ENCODE measurements at regions of chr12 and their contacts with region 1.

Region 1: GRCh38 chr12:68745904-68746571 is at the start of gene SLC35E3:
- DNase-seq: peak; percentile 88 to 95
- ATAC-seq: peak; percentile 96 to 99 (median 99)
- H3K4me3 ChIP-seq: peak within 1 kb of the TSS; percentile 80
- H3K4me3 Mint-ChIP-seq: peak within 1 kb of the TSS; percentile 97
- H3K27ac ChIP-seq: peak within 1 kb of the TSS; percentile 81
- H3K27ac Mint-ChIP-seq: peak within 1 kb of the TSS; percentile 89 to 94
- H3K4me1 ChIP-seq: peaks cover 13% of the 10 kb centered on the region
- H3K4me1 Mint-ChIP-seq: peaks cover 39% of the 10 kb centered on the region in 2 donors
- H3K27me3 ChIP-seq: no peaks in the 10 kb centered on the region
- H3K27me3 Mint-ChIP-seq: no peaks in the 10 kb centered on the region
- CTCF ChIP-seq: no peak
- total RNA-seq, gene SLC35E3: 8.3 to 15.3 (median 10.2) TPM

Region 2: DNA sequence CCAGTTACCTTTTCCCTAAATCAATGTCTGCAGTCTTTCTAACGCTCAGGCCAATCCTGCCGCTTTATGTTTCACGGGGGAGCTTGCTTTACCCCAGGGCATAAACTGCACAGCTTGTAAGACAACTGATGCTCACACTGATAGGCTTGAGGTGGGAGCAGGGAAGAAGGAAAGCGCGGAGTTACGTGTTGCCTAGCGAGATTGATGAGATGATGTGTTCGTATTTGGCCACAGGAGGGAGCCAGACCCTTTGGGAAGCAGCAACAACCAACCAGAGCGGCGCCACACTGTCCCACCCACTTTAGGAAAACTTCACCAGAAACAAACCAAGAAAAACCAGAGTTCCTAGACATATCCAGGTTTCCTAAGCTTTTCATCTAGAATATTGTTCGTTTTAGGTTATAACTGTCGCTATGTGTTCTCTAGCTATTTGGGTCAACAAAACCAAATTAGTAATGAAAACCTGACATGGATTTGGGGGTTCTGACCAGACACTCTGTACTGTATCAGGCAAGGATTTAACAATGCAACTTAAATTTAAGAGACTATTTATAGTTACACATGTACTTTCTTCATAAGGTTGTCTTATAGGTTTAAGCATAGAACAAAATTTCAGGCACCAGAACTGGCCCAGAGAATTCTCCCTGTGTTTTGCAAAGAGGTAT is 522.8 kb before region 1 on chr12:
- intact Hi-C with region 1: loop called (anchors 5 kb)
- DNase-seq: peak; percentile 53 to 91
- ATAC-seq: peak; percentile 95 to 100 (median 99)
- H3K4me3 ChIP-seq: no peak overlapping the region
- H3K4me3 Mint-ChIP-seq: no peak overlapping the region
- H3K27ac ChIP-seq: no peak overlapping the region
- H3K27ac Mint-ChIP-seq: peak overlapping the region in 1 of 2 donors; percentile 32
- H3K4me1 ChIP-seq: peaks cover 4% of the 10 kb centered on the region
- H3K4me1 Mint-ChIP-seq: peaks cover 6 to 7% of the 10 kb centered on the region in 2 donors
- H3K27me3 ChIP-seq: no peaks in the 10 kb centered on the region
- H3K27me3 Mint-ChIP-seq: peaks cover 13 to 27% of the 10 kb centered on the region in 2 donors
- CTCF ChIP-seq: peak; percentile 80

Region 3: GRCh38 chr12:68358532-68359485 is 387.2 kb before region 1 on chr12:
- intact Hi-C with region 1: loop called (anchors 2 kb)
- DNase-seq: peak in 1 of 2 donors; percentile 85
- ATAC-seq: peak; percentile 81 to 89 (median 87)
- H3K4me3 ChIP-seq: no peak overlapping the region
- H3K4me3 Mint-ChIP-seq: peak overlapping the region; percentile 25
- H3K27ac ChIP-seq: peak overlapping the region; percentile 49
- H3K27ac Mint-ChIP-seq: peak overlapping the region; percentile 79 to 94
- H3K4me1 ChIP-seq: peaks cover 19% of the 10 kb centered on the region
- H3K4me1 Mint-ChIP-seq: peaks cover 30 to 31% of the 10 kb centered on the region in 2 donors
- H3K27me3 ChIP-seq: no peaks in the 10 kb centered on the region
- H3K27me3 Mint-ChIP-seq: no peaks in the 10 kb centered on the region
- CTCF ChIP-seq: peak; percentile 78

Region 4: GRCh38 chr12:68807576-68808387 is 61.7 kb after region 1 on chr12 and contains the start of gene MDM2:
- intact Hi-C with region 1: loop called (anchors 1 kb)
- DNase-seq: peak; percentile 99
- ATAC-seq: peak; percentile 88 to 97 (median 93)
- H3K4me3 ChIP-seq: peak within 1 kb of the TSS; percentile 94
- H3K4me3 Mint-ChIP-seq: peak within 1 kb of the TSS; percentile 91
- H3K27ac ChIP-seq: peak within 1 kb of the TSS; percentile 98
- H3K27ac Mint-ChIP-seq: peak within 1 kb of the TSS; percentile 96 to 97
- H3K4me1 ChIP-seq: peaks cover 18% of the 10 kb centered on the region
- H3K4me1 Mint-ChIP-seq: peaks cover 13 to 19% of the 10 kb centered on the region in 2 donors
- H3K27me3 ChIP-seq: no peaks in the 10 kb centered on the region
- H3K27me3 Mint-ChIP-seq: no peaks in the 10 kb centered on the region
- CTCF ChIP-seq: peak; percentile 75
- total RNA-seq, gene MDM2: 130 to 143 (median 132) TPM